ENCODE measurements at regions of chr11 and their contacts with region 1.

Region 1: GRCh38 chr11:67401495-67402191 is at the start of gene PPP1CA:
- DNase-seq: peak; percentile 87 to 97 (median 92)
- H3K4me3 ChIP-seq: peak within 1 kb of the TSS; percentile 78 to 88
- H3K4me3 Mint-ChIP-seq: peak within 1 kb of the TSS; percentile 89 to 97 (median 92)
- H3K27ac ChIP-seq: peak within 1 kb of the TSS; percentile 81
- H3K27ac Mint-ChIP-seq: peak within 1 kb of the TSS; percentile 83 to 98 (median 89)
- H3K4me1 ChIP-seq: peaks cover 78% of the 10 kb centered on the region
- H3K4me1 Mint-ChIP-seq: peaks cover 27 to 80% (median 45%) of the 10 kb centered on the region in 4 donors
- H3K27me3 ChIP-seq: no peaks in the 10 kb centered on the region
- H3K27me3 Mint-ChIP-seq: no peaks in the 10 kb centered on the region
- total RNA-seq, gene PPP1CA: 159 to 161 TPM

Region 2: GRCh38 chr11:67239783-67240575 is 161.7 kb before region 1 on chr11:
- CTCF ChIA-PET with region 1: interaction called, 3 read pairs
- POLR2A ChIA-PET with region 1: interaction called, 10 read pairs
- intact Hi-C with region 1: no loop called
- DNase-seq: peak; percentile 95 to 100 (median 98)
- H3K4me3 ChIP-seq: peak overlapping the region; percentile 52 to 87
- H3K4me3 Mint-ChIP-seq: peak overlapping the region; percentile 96 to 100 (median 99)
- H3K27ac ChIP-seq: peak overlapping the region; percentile 97
- H3K27ac Mint-ChIP-seq: peak overlapping the region; percentile 96 to 100 (median 100)
- H3K4me1 ChIP-seq: peaks cover 39% of the 10 kb centered on the region
- H3K4me1 Mint-ChIP-seq: peaks cover 39 to 62% (median 48%) of the 10 kb centered on the region in 4 donors
- H3K27me3 ChIP-seq: no peaks in the 10 kb centered on the region
- H3K27me3 Mint-ChIP-seq: no peaks in the 10 kb centered on the region

Region 3: DNA sequence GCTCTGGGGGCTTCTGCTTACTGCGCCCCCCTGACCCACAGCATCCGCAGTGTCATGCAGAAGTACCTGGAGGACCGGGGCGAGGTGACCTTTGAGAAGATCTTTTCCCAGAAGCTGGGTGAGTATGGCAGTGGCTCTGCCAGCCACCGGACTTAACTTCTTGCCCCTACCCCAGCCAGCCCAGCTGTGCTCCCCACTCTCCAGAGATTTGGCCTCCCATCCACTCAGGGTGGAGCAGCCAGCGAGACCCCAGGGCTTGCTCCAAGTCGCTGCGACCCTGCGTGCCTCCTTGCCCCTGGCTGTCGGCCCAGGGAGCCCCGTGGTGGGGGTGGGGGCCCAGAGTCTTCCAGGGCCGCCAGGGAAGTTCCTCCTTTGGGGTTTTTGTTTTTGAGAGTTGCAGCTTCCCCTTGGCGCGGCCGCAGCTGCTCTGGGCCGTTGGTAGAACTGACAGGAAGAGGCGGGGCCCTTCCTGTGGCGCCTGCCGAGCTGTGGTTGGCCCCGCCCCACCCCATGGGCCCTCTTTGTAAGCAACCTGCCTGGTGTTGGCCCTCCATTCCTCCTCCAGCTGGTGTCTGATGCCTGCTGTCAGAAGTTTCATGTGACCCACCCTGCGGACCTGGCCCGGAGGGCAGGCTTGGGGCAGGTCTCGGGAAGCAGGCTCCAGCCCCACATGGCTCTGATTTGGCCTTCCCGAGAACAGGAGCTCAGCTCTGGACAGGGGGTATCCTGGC is 124.2 kb before region 1 on chr11:
- CTCF ChIA-PET with region 1: interaction called, 3 read pairs
- POLR2A ChIA-PET with region 1: interaction called, 30 read pairs
- intact Hi-C with region 1: no loop called
- DNase-seq: peak; percentile 92 to 96 (median 93)
- H3K4me3 ChIP-seq: peak overlapping the region; percentile 63 to 71
- H3K4me3 Mint-ChIP-seq: peak overlapping the region; percentile 79 to 92 (median 83)
- H3K27ac ChIP-seq: peak overlapping the region; percentile 95
- H3K27ac Mint-ChIP-seq: peak overlapping the region; percentile 94 to 99 (median 97)
- H3K4me1 ChIP-seq: peaks cover 98% of the 10 kb centered on the region
- H3K4me1 Mint-ChIP-seq: peaks cover 25 to 90% (median 54%) of the 10 kb centered on the region in 4 donors
- H3K27me3 ChIP-seq: no peaks in the 10 kb centered on the region
- H3K27me3 Mint-ChIP-seq: no peaks in the 10 kb centered on the region

Region 4: DNA sequence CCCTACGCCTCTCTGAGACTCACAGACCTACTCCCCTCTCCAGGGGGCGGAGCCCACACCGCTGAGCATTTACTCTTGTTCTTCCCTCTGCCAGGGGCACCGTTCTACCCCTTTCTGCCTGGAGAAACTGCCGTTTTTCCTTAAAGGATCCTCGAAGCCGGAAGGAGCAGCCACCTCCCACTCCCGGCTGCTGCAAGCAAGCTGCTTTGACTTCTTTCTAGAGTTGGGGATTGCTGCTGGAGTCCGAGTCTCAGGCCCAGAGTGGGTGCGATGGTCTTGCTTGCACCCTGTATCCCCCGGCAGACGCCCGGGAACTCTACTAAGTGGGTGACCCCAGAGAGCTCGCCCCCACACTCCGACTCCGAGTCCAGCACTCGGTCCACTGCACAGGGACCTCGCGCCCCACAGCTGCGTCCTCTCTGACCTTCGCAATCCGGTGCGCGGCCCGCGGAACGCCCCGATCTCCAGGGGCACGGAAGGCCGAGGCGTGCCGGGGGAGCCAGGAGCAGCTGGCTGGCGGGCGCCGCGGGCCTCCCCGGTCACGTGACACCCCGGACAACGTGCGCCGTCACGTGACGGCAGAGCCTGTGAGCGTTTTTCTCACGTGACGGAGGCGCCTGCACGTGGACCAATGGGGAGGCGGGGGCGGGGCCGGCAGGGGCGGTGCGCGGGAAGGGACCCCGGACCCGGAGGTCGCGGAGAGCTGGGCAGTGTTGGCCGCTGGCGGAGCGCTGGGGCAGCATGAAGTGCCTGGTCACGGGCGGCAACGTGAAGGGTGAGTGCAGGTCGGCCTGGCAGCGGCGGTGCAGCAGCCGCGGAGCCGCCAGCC is 10.1 kb before region 1 on chr11 and contains the start of gene RAD9A:
- CTCF ChIA-PET with region 1: interaction called, 40 read pairs
- POLR2A ChIA-PET with region 1: interaction called, 94 read pairs
- intact Hi-C with region 1: loop called (anchors 1 kb)
- DNase-seq: peak; percentile 86 to 93 (median 89)
- H3K4me3 ChIP-seq: peak within 1 kb of the TSS; percentile 63 to 75
- H3K4me3 Mint-ChIP-seq: peak within 1 kb of the TSS; percentile 87 to 93 (median 91)
- H3K27ac ChIP-seq: peak within 1 kb of the TSS; percentile 79
- H3K27ac Mint-ChIP-seq: peak within 1 kb of the TSS; percentile 82 to 94 (median 87)
- H3K4me1 ChIP-seq: peaks cover 17% of the 10 kb centered on the region
- H3K4me1 Mint-ChIP-seq: peaks cover 23 to 46% (median 36%) of the 10 kb centered on the region in 4 donors
- H3K27me3 ChIP-seq: no peaks in the 10 kb centered on the region
- H3K27me3 Mint-ChIP-seq: no peaks in the 10 kb centered on the region
- total RNA-seq, gene RAD9A: 51.8 to 55.9 TPM

Region 5: DNA sequence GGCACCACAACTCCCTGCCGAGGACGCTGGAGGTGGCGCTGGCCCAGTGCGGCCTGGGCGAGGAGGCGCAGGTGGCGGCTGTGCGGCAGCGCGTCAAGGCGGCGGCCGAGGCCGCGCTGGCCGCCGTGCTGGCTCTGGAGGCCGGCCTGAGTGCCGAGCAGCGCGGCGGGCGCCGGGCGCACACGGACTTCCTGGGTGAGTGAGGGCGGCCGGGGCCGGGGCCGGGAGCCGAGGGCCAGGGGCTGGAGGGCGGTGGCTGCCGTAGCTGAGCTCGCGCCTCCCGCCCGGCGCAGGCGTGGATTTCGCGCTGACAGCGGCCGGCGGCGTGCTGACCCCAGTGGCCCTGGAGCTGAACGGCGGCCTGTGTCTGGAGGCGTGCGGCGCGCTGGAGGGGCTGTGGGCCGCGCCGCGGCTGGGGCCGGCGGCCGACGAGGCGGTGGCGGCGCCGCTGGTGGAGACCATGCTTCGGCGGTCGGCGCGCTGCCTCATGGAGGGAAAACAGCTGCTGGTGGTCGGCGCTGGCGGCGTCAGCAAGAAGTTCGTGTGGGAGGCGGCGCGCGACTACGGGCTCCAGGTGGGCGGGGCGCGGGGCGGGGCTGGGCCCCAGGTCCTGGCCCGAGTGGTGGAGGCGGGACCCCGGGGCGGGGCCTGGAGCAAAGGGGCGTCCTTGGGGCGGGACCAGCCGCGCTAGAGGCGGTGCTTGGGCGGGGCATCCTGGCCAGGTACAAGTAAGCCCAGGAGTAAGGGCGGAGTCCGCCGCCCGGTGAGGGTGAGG is 19.2 kb after region 1 on chr11:
- CTCF ChIA-PET with region 1: interaction called, 63 read pairs
- POLR2A ChIA-PET with region 1: interaction called, 2,262 read pairs
- intact Hi-C with region 1: loop called (anchors 1 kb)
- DNase-seq: peak; percentile 96 to 99 (median 97)
- H3K4me3 ChIP-seq: peak overlapping the region in 1 of 2 donors; percentile 69
- H3K4me3 Mint-ChIP-seq: peak overlapping the region; percentile 67 to 87 (median 80)
- H3K27ac ChIP-seq: peak overlapping the region; percentile 66
- H3K27ac Mint-ChIP-seq: peak overlapping the region; percentile 64 to 94 (median 92)
- H3K4me1 ChIP-seq: peaks cover 53% of the 10 kb centered on the region
- H3K4me1 Mint-ChIP-seq: peaks cover 29 to 63% (median 46%) of the 10 kb centered on the region in 4 donors
- H3K27me3 ChIP-seq: no peaks in the 10 kb centered on the region
- H3K27me3 Mint-ChIP-seq: no peaks in the 10 kb centered on the region

Region 6: DNA sequence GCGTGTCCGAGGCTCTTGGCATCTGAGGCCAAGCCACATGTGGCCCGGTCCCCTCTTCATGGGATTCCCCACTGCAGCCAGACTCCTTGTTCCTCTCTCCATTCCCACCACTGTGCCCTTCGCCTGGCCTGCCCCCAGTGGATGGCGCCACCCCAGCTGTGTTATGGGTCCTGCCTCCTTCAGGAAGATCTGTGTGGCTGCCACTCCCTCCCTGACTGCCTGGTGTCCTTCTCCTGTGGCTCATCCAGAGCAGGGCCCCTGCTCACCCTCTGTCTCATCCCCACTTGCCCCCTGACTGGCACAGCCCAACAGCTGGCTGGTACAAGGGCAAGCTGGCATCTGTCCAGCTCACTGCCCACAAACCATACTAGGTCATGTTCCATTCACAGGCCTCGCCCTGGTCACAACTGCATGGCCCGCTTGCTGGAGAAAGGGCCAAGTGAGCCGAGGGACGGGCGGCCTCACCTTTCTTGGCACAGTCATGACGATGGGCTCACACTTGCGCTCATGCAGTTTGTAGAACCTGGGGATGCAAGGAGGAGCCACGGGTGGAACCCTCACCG is 37.8 kb after region 1 on chr11:
- CTCF ChIA-PET with region 1: interaction called, 65 read pairs
- POLR2A ChIA-PET with region 1: interaction called, 2,262 read pairs
- intact Hi-C with region 1: loop called (anchors 2 kb)
- DNase-seq: peak in 1 of 5 donors; percentile 34
- H3K4me3 ChIP-seq: peak overlapping the region; percentile 29 to 81
- H3K4me3 Mint-ChIP-seq: peak overlapping the region; percentile 96 to 99 (median 97)
- H3K27ac ChIP-seq: peak overlapping the region; percentile 78
- H3K27ac Mint-ChIP-seq: peak overlapping the region; percentile 92 to 98 (median 96)
- H3K4me1 ChIP-seq: peaks cover 69% of the 10 kb centered on the region
- H3K4me1 Mint-ChIP-seq: peaks cover 35 to 81% (median 53%) of the 10 kb centered on the region in 4 donors
- H3K27me3 ChIP-seq: no peaks in the 10 kb centered on the region
- H3K27me3 Mint-ChIP-seq: no peaks in the 10 kb centered on the region

Region 7: DNA sequence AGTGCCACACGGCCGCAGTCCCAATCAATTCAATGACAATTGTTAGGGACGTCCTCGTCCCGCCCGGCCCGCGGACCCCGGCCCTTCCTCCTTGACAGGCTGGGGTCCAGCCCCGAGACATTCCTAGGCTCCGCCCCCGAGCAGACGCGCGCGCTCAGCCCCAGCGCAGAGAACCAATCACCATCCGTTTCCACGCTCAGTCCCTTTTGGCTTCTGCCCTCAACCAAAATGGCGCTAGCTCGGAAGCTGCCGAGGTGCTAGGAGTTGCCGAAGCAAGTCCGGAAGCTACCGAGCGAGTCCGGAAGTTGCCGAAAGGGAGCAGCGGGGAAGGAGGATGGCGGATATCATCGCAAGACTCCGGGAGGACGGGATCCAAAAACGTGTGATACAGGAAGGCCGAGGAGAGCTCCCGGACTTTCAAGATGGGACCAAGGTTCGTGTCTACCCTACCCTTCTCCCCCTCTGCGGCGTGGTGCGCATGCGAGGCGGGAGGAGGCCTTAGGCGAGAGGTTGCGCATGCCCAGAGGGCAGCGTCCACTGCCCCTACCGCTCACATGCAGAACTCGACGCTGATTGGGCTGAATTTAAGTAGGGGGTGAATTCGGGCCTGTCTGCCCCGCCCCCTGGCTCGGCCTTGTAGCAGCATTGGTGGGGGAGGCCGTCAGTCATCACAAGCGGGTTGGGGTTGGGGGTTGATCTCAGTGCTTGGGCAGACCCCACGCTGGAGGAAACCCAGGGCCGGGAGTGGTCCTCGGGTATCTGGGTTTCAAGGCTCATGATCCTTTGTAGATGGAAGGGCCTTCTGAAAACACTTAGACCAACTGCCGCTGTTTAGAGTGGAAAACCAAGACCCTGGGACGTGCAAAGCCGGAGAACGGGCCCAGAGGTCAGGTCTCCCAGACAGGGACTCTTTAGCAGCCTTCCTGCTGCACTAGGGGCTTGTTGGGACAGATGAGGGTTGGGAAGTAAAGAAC is 81.5 kb after region 1 on chr11 and contains the start of gene AIP:
- CTCF ChIA-PET with region 1: interaction called, 9 read pairs
- POLR2A ChIA-PET with region 1: interaction called, 194 read pairs
- intact Hi-C with region 1: loop called (anchors 1 kb)
- DNase-seq: peak; percentile 97 to 98 (median 98)
- H3K4me3 ChIP-seq: peak within 1 kb of the TSS; percentile 64 to 78
- H3K4me3 Mint-ChIP-seq: peak within 1 kb of the TSS; percentile 95 to 100 (median 98)
- H3K27ac ChIP-seq: peak within 1 kb of the TSS; percentile 91
- H3K27ac Mint-ChIP-seq: peak within 1 kb of the TSS; percentile 94 to 100 (median 99)
- H3K4me1 ChIP-seq: peaks cover 57% of the 10 kb centered on the region
- H3K4me1 Mint-ChIP-seq: peaks cover 41 to 59% (median 50%) of the 10 kb centered on the region in 4 donors
- H3K27me3 ChIP-seq: no peaks in the 10 kb centered on the region
- H3K27me3 Mint-ChIP-seq: no peaks in the 10 kb centered on the region
- total RNA-seq, gene AIP: 131 to 132 TPM

Region 8: DNA sequence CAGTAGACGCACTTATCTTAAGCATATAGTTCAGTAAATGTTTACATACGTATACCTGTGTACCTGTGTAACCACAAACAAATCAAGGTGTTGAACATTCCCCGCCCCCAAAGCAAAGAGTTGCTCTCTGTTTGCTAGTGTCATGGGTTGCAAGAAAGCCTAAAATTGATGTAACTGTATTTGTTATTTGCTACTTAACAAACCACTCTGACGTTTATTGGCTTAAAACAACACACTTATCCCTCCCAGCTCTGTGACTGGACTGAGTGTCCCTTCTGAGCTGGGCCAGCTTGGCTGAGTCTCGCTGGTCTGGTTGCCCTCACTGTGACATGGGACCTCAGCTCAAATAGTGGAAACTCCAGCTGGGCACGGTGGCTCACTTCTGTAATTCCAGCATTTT is 147.0 kb after region 1 on chr11:
- CTCF ChIA-PET with region 1: no interaction called
- POLR2A ChIA-PET with region 1: no interaction called
- intact Hi-C with region 1: no loop called
- DNase-seq: no peak
- H3K4me3 ChIP-seq: no peak overlapping the region
- H3K4me3 Mint-ChIP-seq: no peak overlapping the region
- H3K27ac ChIP-seq: no peak overlapping the region
- H3K27ac Mint-ChIP-seq: no peak overlapping the region
- H3K4me1 ChIP-seq: no peaks in the 10 kb centered on the region
- H3K4me1 Mint-ChIP-seq: peaks cover 0 to 1% (median 0%) of the 10 kb centered on the region in 4 donors
- H3K27me3 ChIP-seq: no peaks in the 10 kb centered on the region
- H3K27me3 Mint-ChIP-seq: peaks cover 2 to 5% of the 10 kb centered on the region in 2 donors

Region 9: DNA sequence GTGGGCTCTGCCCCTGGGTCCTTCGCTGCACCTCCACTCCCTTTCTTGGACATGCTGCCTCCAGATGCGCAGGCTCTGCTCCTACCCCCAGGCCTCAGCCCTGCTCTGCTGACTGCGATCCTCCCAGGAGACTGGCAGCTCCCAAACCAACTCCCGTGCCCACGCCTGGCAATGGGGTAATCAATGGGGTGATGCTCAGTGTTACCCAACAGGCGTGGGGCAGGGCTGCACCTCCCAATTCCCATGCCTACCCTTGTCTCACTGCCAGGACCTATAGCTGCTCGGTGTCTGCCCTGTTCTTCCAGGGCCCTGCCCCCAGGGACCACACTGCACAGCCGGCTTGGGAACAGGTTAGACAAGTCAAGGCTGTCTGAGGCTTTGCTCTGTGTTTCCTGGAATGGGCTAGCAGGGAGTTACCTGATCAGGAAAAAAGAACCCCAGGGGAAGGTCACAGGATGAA is 272.8 kb after region 1 on chr11 and contains the start of gene ALDH3B2:
- CTCF ChIA-PET with region 1: no interaction called
- POLR2A ChIA-PET with region 1: no interaction called
- intact Hi-C with region 1: no loop called
- DNase-seq: no peak
- H3K4me3 ChIP-seq: no peak within 1 kb of the TSS
- H3K4me3 Mint-ChIP-seq: no peak within 1 kb of the TSS
- H3K27ac ChIP-seq: no peak within 1 kb of the TSS
- H3K27ac Mint-ChIP-seq: no peak within 1 kb of the TSS
- H3K4me1 ChIP-seq: no peaks in the 10 kb centered on the region
- H3K4me1 Mint-ChIP-seq: no peaks in the 10 kb centered on the region
- H3K27me3 ChIP-seq: no peaks in the 10 kb centered on the region
- H3K27me3 Mint-ChIP-seq: peaks cover 8 to 16% of the 10 kb centered on the region in 2 donors
- total RNA-seq, gene ALDH3B2: not detected

Measured in CD4-positive, alpha-beta memory T cell (primary cell).